CD4-positive, alpha-beta memory T cell (primary cell): ENCODE measurements at regions of chr13 and their contacts with region 1.

Region 1: DNA sequence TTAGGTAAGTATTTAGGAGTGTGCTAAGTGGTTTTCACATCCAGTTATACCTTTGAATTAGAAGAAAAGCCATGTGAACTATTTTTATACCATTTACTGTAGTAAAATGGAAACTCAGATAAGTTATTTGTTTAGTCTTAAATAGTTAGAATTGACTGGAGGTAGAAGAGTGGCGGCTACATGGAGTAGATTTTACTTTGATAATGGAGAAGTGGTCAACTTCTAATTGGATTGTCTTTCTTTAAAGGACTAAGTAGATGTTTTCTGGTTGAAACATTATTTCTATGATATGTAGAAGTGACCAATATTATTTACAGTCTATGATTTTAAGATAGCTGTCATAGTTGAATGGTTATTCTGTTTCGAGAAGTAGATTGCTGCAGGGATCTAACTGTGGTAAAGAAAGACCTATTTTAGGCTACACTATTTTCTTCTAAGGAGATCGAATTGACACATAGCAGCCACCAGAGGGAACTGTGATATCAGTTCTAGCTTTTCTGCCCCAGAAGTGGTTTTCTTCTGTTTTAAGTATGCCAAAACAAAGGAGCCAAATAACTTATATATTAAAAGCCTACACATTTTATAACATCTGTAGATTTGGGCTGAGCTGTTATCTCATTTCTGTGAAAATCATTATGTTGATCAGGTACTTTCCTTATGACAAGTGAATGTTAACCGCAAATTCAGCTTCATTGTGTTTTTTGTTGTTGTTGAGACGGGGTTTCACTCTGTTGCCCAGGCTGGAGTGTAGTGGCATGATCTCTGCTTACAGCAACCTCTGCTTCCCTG is 26.1 kb downstream of the ZMYM2 start:
- DNase-seq: peak; percentile 20 to 58 (median 27)
- H3K4me3 ChIP-seq: no peak overlapping the region
- H3K4me3 Mint-ChIP-seq: peak overlapping the region in 3 of 8 donors; percentile 5 to 20 (median 9)
- H3K27ac ChIP-seq: peak overlapping the region; percentile 3
- H3K27ac Mint-ChIP-seq: peak overlapping the region; percentile 9 to 83 (median 62)
- H3K4me1 ChIP-seq: peaks cover 29% of the 10 kb centered on the region
- H3K4me1 Mint-ChIP-seq: peaks cover 24 to 59% (median 35%) of the 10 kb centered on the region in 4 donors
- H3K27me3 ChIP-seq: no peaks in the 10 kb centered on the region
- H3K27me3 Mint-ChIP-seq: no peaks in the 10 kb centered on the region

Region 2: GRCh38 chr13:19838865-19839275 is 145.8 kb before region 1 on chr13:
- CTCF ChIA-PET with region 1: no interaction called
- POLR2A ChIA-PET with region 1: no interaction called
- intact Hi-C with region 1: no loop called
- DNase-seq: no peak
- H3K4me3 ChIP-seq: no peak overlapping the region
- H3K4me3 Mint-ChIP-seq: no peak overlapping the region
- H3K27ac ChIP-seq: no peak overlapping the region
- H3K27ac Mint-ChIP-seq: no peak overlapping the region
- H3K4me1 ChIP-seq: no peaks in the 10 kb centered on the region
- H3K4me1 Mint-ChIP-seq: peaks cover 0 to 4% (median 2%) of the 10 kb centered on the region in 4 donors
- H3K27me3 ChIP-seq: no peaks in the 10 kb centered on the region
- H3K27me3 Mint-ChIP-seq: no peaks in the 10 kb centered on the region

Region 3: GRCh38 chr13:20001366-20002190 is 17.0 kb after region 1 on chr13:
- CTCF ChIA-PET with region 1: interaction called, 15 read pairs
- POLR2A ChIA-PET with region 1: no interaction called
- intact Hi-C with region 1: no loop called
- DNase-seq: no peak
- H3K4me3 ChIP-seq: no peak overlapping the region
- H3K4me3 Mint-ChIP-seq: no peak overlapping the region
- H3K27ac ChIP-seq: no peak overlapping the region
- H3K27ac Mint-ChIP-seq: peak overlapping the region in 3 of 7 donors; percentile 18 to 82 (median 41)
- H3K4me1 ChIP-seq: peaks cover 9% of the 10 kb centered on the region
- H3K4me1 Mint-ChIP-seq: peaks cover 28 to 55% (median 38%) of the 10 kb centered on the region in 4 donors
- H3K27me3 ChIP-seq: no peaks in the 10 kb centered on the region
- H3K27me3 Mint-ChIP-seq: no peaks in the 10 kb centered on the region

Region 4: DNA sequence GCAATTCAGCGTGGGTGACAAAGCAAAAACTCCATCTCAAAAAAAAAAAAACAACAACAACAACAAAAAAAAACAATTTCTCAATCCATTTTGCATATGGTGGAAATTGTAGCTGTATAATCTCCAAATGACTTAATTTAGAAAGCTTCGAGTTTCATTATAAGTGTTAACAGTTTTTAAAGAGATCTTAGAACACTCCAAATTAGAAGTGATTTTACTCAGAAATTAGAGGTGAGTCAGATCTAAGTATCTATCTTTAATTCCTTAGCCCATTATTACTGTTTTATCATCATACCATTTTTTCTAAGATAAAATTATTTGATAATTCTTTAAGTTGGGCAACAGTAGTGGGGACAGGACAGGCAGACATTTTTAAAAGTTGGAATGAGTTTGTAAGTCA is 34.4 kb after region 1 on chr13:
- CTCF ChIA-PET with region 1: no interaction called
- POLR2A ChIA-PET with region 1: no interaction called
- intact Hi-C with region 1: no loop called
- DNase-seq: no peak
- H3K4me3 ChIP-seq: no peak overlapping the region
- H3K4me3 Mint-ChIP-seq: no peak overlapping the region
- H3K27ac ChIP-seq: no peak overlapping the region
- H3K27ac Mint-ChIP-seq: peak overlapping the region in 1 of 7 donors; percentile 8
- H3K4me1 ChIP-seq: no peaks in the 10 kb centered on the region
- H3K4me1 Mint-ChIP-seq: peaks cover 13 to 30% (median 23%) of the 10 kb centered on the region in 4 donors
- H3K27me3 ChIP-seq: no peaks in the 10 kb centered on the region
- H3K27me3 Mint-ChIP-seq: no peaks in the 10 kb centered on the region

Region 5: DNA sequence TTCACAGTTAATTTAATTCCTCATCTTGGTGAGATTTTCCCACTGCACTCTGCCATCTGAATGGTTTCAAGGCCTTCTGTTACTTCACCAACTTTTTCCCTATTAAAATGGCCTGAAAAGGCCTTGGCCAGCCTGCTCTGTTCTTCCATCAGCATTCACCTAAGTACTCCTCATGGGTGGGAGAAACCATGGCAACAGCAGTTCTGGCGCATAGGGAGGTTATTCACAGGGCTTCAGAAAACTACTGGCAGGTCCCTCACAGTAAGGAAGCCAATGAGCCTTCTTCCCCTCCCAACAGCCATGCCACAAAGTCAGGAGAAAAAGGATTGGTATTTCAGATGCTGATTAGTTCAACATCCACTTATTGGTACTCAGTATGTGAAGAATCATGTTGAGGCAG is 225.3 kb after region 1 on chr13:
- CTCF ChIA-PET with region 1: no interaction called
- POLR2A ChIA-PET with region 1: no interaction called
- intact Hi-C with region 1: no loop called
- DNase-seq: no peak
- H3K4me3 ChIP-seq: no peak overlapping the region
- H3K4me3 Mint-ChIP-seq: no peak overlapping the region
- H3K27ac ChIP-seq: no peak overlapping the region
- H3K27ac Mint-ChIP-seq: no peak overlapping the region
- H3K4me1 ChIP-seq: no peaks in the 10 kb centered on the region
- H3K4me1 Mint-ChIP-seq: no peaks in the 10 kb centered on the region
- H3K27me3 ChIP-seq: no peaks in the 10 kb centered on the region
- H3K27me3 Mint-ChIP-seq: peaks cover 13 to 20% of the 10 kb centered on the region in 2 donors